CD14-positive monocyte (primary cell): ENCODE measurements at regions of chr3 and their contacts with region 1.

Region 1: DNA sequence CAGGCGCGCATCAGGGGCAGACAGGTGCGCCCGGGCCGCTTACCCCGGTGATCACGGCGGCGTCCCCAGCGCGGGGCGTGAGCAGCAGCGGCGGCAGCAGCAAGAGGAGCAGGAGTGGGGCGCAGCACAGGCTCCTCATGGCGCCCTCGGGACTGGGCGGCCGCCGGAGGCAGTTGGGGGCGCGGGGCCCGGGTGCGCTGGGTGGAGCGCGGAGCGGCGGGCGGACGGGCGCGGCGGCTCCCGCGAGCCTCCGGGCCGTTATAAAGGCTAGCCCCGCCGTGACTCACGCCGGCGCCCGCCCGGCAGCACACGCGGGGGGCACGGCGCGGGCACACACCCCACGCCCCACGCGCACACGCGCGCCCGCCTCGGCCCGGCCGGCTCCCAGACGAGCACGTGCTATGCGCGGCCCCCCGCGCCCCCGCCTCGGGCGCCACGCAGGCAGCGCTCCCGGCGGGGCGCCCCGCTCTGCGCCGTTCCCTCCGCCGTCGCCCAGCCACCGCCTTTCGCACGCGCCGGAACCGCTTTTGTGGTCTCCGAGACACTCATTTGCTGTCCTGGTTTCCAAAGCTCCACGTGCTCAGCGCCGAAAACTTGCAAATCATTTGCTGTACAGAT is at the start of gene PROK2:
- DNase-seq: peak; percentile 42 to 48 (median 47)
- H3K4me3 ChIP-seq: peak within 1 kb of the TSS; percentile 63 to 95 (median 93)
- H3K4me3 Mint-ChIP-seq: peak within 1 kb of the TSS; percentile 89 to 98
- H3K27ac ChIP-seq: peak within 1 kb of the TSS in 1 of 2 donors; percentile 92
- H3K27ac Mint-ChIP-seq: peak within 1 kb of the TSS; percentile 81 to 95 (median 91)
- H3K4me1 ChIP-seq: peaks cover 31 to 55% of the 10 kb centered on the region in 2 donors
- H3K4me1 Mint-ChIP-seq: peaks cover 55% of the 10 kb centered on the region
- H3K27me3 ChIP-seq: peaks cover 0 to 48% of the 10 kb centered on the region in 2 donors
- H3K27me3 Mint-ChIP-seq: peaks cover 15 to 29% (median 17%) of the 10 kb centered on the region in 3 donors
- CTCF ChIP-seq: no peak
- polyA plus RNA-seq, gene PROK2: 25.4 to 81.7 (median 37.8) TPM

Region 2: GRCh38 chr3:71673486-71673885 is 111.5 kb before region 1 on chr3:
- intact Hi-C with region 1: no loop called
- DNase-seq: no peak
- H3K4me3 ChIP-seq: no peak overlapping the region
- H3K4me3 Mint-ChIP-seq: no peak overlapping the region
- H3K27ac ChIP-seq: no peak overlapping the region
- H3K27ac Mint-ChIP-seq: no peak overlapping the region
- H3K4me1 ChIP-seq: no peaks in the 10 kb centered on the region
- H3K4me1 Mint-ChIP-seq: no peaks in the 10 kb centered on the region
- H3K27me3 ChIP-seq: no peaks in the 10 kb centered on the region
- H3K27me3 Mint-ChIP-seq: peaks cover 0 to 2% (median 1%) of the 10 kb centered on the region in 3 donors
- CTCF ChIP-seq: no peak

Region 3: GRCh38 chr3:71744738-71745137 is 40.3 kb before region 1 on chr3:
- intact Hi-C with region 1: no loop called
- DNase-seq: no peak
- H3K4me3 ChIP-seq: no peak overlapping the region
- H3K4me3 Mint-ChIP-seq: no peak overlapping the region
- H3K27ac ChIP-seq: no peak overlapping the region
- H3K27ac Mint-ChIP-seq: no peak overlapping the region
- H3K4me1 ChIP-seq: no peaks in the 10 kb centered on the region
- H3K4me1 Mint-ChIP-seq: peaks cover 2% of the 10 kb centered on the region
- H3K27me3 ChIP-seq: no peaks in the 10 kb centered on the region
- H3K27me3 Mint-ChIP-seq: no peaks in the 10 kb centered on the region
- CTCF ChIP-seq: no peak

Region 4: DNA sequence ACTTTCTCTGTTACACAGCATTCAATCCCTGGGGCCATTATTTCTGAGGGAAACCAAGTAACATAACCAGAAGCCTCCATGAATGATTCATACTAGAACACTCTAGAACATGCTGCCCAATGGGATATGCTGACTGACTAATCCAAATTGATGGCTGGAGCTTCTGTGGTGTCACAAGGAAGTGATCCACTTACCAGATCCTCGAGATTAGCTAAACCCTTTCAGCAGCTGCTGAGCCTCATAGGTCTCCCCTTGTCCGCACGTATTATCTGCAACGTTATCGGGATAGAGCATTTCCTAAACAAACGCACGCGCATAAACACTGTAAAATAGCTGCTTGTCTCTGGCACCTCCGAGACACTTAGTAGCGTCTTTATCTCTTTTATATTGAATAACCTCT is 61.2 kb after region 1 on chr3:
- intact Hi-C with region 1: loop called in 1 of 2 experiments (anchors 10 kb)
- DNase-seq: peak in 1 of 3 donors; percentile 16
- H3K4me3 ChIP-seq: no peak overlapping the region
- H3K4me3 Mint-ChIP-seq: no peak overlapping the region
- H3K27ac ChIP-seq: no peak overlapping the region
- H3K27ac Mint-ChIP-seq: no peak overlapping the region
- H3K4me1 ChIP-seq: peaks cover 40 to 50% of the 10 kb centered on the region in 2 donors
- H3K4me1 Mint-ChIP-seq: peaks cover 52% of the 10 kb centered on the region
- H3K27me3 ChIP-seq: no peaks in the 10 kb centered on the region
- H3K27me3 Mint-ChIP-seq: peaks cover 0 to 1% (median 1%) of the 10 kb centered on the region in 3 donors
- CTCF ChIP-seq: no peak